Endothelial cell of umbilical vein (primary cell): ENCODE measurements at regions of chr6 and their contacts with region 1.

Region 1: GRCh38 chr6:83417880-83418663 is 12.8 kb downstream of the ME1 start:
- DNase-seq: peak; percentile 49
- H3K4me3 ChIP-seq: no peak overlapping the region
- H3K27ac ChIP-seq: no peak overlapping the region
- H3K4me1 ChIP-seq: no peaks in the 10 kb centered on the region
- H3K27me3 ChIP-seq: no peaks in the 10 kb centered on the region
- CTCF ChIP-seq: peak; percentile 18 to 37
- POLR2A ChIP-seq: no peak

Region 2: DNA sequence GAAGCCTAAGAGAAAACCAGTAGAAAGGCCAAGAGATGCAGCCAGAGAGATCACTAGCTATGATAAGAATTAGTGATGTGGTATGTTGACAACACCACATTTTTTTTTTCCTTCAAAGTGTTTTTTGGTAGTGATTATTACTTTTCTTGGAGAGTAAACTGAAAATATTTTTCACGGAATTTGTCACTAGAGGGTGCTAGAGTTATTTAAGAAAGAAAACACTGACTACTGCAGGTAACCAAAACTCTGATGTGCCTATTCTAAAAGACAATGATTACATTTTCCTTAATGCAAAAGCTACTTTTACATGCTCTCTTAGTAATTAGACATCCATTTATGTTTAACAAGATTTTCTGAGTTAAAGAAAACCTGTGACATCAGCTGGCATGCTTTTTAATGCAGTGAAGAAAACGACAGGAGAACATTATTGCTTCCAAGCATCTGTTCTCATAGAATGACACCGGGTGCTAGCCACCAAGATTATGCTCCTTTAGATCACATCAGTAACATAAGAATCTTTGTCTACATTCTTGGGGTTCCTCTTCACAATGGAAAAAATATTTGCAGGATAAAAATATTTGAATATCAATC is 196.1 kb before region 1 on chr6:
- CTCF ChIA-PET with region 1: interaction called, 8 read pairs
- POLR2A ChIA-PET with region 1: no interaction called
- dilution Hi-C with region 1: no loop called
- intact Hi-C with region 1: loop called (anchors 2 kb)
- DNase-seq: peak; percentile 46
- H3K4me3 ChIP-seq: no peak overlapping the region
- H3K27ac ChIP-seq: no peak overlapping the region
- H3K4me1 ChIP-seq: peaks cover 9% of the 10 kb centered on the region
- H3K27me3 ChIP-seq: no peaks in the 10 kb centered on the region
- CTCF ChIP-seq: peak in 1 of 2 donors; percentile 29
- POLR2A ChIP-seq: no peak

Region 3: GRCh38 chr6:83430611-83431563 is 12.8 kb after region 1 on chr6 and contains the start of gene ME1:
- CTCF ChIA-PET with region 1: interaction called, 5 read pairs
- POLR2A ChIA-PET with region 1: no interaction called
- dilution Hi-C with region 1: no loop called
- intact Hi-C with region 1: loop called (anchors 1 kb)
- DNase-seq: peak; percentile 77
- H3K4me3 ChIP-seq: peak within 1 kb of the TSS; percentile 60 to 90 (median 73)
- H3K27ac ChIP-seq: peak within 1 kb of the TSS; percentile 84
- H3K4me1 ChIP-seq: peaks cover 7% of the 10 kb centered on the region
- H3K27me3 ChIP-seq: no peaks in the 10 kb centered on the region
- CTCF ChIP-seq: no peak
- POLR2A ChIP-seq: no peak
- total RNA-seq, gene ME1: 27.0 and 29.3 TPM in 2 replicates

Region 4: GRCh38 chr6:83505356-83505755 is 87.3 kb after region 1 on chr6:
- CTCF ChIA-PET with region 1: interaction called, 145 read pairs
- POLR2A ChIA-PET with region 1: no interaction called
- dilution Hi-C with region 1: no loop called
- intact Hi-C with region 1: no loop called
- DNase-seq: no peak
- H3K4me3 ChIP-seq: no peak overlapping the region
- H3K27ac ChIP-seq: no peak overlapping the region
- H3K4me1 ChIP-seq: no peaks in the 10 kb centered on the region
- H3K27me3 ChIP-seq: peaks cover 0 to 2% of the 10 kb centered on the region in 2 experiments
- CTCF ChIP-seq: no peak
- POLR2A ChIP-seq: no peak

Region 5: DNA sequence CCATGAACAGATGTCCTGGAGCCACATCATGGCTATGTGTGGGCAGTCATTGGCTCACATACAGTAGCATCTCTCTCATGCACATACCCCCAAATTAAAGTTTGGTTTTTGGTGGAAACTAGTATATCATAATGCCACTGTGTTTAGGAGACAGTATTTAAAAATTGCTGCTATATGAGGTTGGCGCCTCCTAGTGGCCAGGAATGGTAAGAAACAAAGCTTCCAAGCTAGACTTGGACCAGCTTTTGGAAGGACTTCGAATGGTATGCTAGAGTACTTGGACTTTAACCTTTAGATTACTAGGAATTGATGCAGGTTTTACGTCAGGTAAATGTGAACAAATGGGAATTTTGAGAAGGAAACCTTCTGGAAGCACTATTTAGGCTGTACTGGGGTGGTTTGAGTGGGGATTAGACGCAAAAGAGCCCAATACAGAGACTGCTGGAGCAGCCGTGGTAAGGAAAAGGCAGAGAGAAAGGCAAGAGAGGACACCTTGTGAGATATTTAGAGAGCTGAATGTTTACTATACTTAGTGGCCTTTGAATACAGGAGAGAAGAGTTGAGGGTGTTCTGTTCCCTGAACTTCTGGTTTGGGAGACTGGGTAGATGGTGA is 118.1 kb after region 1 on chr6:
- CTCF ChIA-PET with region 1: interaction called, 12 read pairs
- POLR2A ChIA-PET with region 1: no interaction called
- dilution Hi-C with region 1: no loop called
- intact Hi-C with region 1: no loop called
- DNase-seq: peak; percentile 58
- H3K4me3 ChIP-seq: no peak overlapping the region
- H3K27ac ChIP-seq: no peak overlapping the region
- H3K4me1 ChIP-seq: no peaks in the 10 kb centered on the region
- H3K27me3 ChIP-seq: peaks cover 0 to 7% of the 10 kb centered on the region in 2 experiments
- CTCF ChIP-seq: peak; percentile 69 to 81
- POLR2A ChIP-seq: no peak

Region 6: DNA sequence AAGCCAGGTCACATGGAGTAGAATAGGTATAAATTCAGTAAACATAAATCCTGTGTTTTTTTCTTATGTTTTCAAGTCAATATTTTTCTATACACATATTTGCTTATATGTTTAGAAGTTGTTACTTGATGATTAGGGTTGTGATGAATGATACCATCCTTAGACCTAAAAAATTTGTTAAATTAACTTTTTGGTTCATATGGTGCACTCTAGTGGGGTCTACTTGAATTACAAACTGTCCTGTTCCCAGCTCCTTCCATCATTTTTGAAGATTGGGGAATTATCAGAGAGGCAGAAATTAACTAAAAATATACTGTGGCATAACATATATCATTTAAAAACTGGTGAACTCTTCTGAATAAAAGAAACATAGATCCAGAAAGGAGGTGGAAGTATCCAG is 386.8 kb after region 1 on chr6:
- CTCF ChIA-PET with region 1: no interaction called
- POLR2A ChIA-PET with region 1: no interaction called
- dilution Hi-C with region 1: no loop called
- intact Hi-C with region 1: no loop called
- DNase-seq: peak; percentile 9
- H3K4me3 ChIP-seq: no peak overlapping the region
- H3K27ac ChIP-seq: no peak overlapping the region
- H3K4me1 ChIP-seq: no peaks in the 10 kb centered on the region
- H3K27me3 ChIP-seq: no peaks in the 10 kb centered on the region
- CTCF ChIP-seq: peak in 1 of 2 donors; percentile 4
- POLR2A ChIP-seq: no peak